ENCODE measurements at regions of chr4 and their contacts with region 1.

Region 1: DNA sequence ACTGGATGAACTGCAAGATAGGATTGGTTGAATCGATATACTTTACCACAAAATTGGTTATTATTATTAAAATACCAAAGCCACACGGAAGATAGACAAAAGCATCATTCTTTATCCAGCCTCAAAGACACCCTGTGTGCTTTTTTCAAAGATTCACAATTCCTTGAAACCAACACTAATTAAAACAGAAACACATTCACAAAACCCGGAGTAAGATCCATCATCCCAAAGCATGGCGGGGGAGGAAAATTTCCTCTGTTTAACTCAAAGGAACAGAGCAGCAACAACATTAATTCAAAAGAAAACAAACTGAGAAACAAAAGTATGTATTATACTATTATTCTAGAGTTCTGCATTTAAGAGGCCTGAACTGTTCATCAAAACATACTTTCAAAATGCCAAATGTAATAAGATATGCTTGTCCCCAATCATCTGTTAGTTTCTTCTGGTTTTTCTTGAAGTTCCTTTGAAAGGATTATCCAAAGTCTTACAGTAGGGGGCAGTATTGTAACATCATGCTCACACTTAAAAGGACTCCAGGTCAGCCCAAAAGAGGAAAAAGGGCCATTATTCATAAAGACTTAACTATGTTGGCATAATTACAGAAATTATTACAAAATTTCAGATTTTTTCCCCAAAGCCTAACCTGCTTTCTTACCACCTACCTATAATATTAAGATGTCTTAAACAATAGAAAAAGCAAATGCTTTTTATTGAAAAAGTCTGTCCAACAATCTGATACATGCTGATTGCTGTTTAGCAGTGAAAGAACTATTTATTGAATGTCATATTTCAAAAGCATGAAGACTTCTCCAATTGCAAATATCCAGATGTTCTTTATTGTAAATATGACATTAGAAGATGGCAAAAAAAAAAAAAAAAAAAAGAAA is 168.7 kb downstream of the SCFD2 start:
- DNase-seq: peak; percentile 12 to 75
- H3K4me3 ChIP-seq: 0 out of 2 replicates have a peak overlapping the region, but pooled peaks have one; percentile 2
- H3K4me1 ChIP-seq: peaks cover 11% of the 10 kb centered on the region; the same call in 1 of the 2 replicates
- H3K27me3 ChIP-seq: no peaks in the 10 kb centered on the region

Region 2: DNA sequence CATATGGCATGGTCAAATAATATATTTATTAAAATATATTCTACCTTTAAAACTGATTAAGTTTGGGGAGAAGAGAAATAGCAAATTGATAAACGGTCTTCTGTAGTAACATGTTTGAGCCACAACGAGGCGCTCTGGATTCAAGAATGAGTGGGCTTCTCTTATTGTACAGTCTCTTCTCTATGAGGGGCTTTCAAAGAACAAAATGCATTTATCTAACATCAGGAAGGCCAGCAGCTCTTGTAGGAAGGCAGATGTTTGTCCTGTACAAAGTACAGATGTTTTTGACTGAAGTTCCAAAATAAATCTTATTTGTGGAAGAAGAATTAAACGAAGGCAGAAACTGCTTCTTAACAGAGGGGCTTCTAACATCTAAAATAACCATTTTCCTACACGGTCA is 181.4 kb before region 1 on chr4:
- in situ Hi-C with region 1: loop called (anchors 25 kb)
- DNase-seq: peak; percentile 64 to 68
- H3K4me3 ChIP-seq: no peak overlapping the region
- H3K4me1 ChIP-seq: 0 out of 2 replicates have a peak, but pooled peaks cover 4% of the 10 kb centered on the region
- H3K27me3 ChIP-seq: no peaks in the 10 kb centered on the region

Region 3: DNA sequence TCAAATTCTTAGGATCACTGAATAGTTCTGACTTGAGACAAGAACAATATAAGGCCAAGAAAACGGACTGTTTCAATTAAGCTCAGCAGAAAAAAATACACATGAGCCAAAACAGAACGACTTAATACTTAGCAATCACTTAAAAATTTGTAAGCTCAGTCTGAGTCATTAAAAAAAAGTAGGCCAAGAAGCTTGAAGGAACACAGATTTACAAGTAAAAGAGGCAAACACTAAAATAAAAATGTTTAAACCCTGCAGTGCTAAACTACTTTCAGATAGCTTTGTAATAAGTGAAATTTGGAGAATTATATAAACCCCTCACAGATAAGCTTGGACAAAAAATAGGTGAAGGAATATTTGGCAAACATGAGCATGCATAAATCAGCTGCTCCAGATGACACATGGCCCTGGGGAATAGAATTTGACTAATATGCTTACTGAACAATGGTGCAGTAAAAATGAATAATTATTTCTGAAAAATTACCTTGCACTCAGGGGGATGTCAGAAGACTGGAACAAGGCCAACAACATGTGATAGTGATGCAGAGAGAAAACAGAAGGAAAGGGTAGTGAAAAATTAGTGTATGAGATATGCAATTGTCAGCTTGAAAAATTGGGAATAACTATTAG is 344.6 kb after region 1 on chr4:
- in situ Hi-C with region 1: no loop called
- DNase-seq: no peak
- H3K4me3 ChIP-seq: no peak overlapping the region
- H3K4me1 ChIP-seq: peaks cover 8% of the 10 kb centered on the region
- H3K27me3 ChIP-seq: no peaks in the 10 kb centered on the region; the same call in 1 of the 2 replicates

Region 4: DNA sequence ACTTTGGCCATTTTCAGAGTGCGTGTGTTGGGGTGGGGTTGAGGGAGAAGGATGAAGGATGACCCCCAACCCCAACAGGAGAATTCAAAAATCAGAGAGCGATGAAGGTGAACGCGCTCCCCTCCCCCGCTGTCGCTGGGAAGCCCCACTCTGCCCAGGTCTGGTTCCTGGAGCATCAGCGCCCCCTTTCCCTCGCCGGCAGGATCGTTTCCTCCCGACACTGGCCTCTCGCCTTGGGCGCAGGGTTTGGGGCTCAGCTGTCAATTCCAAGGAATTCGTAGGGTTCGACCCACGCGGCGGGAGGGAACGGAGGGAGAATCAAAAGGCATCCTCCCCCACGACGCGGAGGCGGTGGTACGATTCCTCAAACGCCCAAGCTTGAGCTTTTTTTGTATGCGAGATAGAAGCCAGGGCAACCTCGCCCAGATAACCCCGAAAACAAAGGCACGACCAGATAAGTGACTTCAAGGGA is 1031.0 kb after region 1 on chr4:
- in situ Hi-C with region 1: loop called (anchors 5 kb)
- DNase-seq: peak; percentile 81 to 94
- H3K4me3 ChIP-seq: peak overlapping the region; percentile 55
- H3K4me1 ChIP-seq: peaks cover 26% of the 10 kb centered on the region
- H3K27me3 ChIP-seq: peaks cover 32% of the 10 kb centered on the region